ENCODE measurements at regions of chr2 and their contacts with region 1.

Region 1: GRCh38 chr2:237923481-237924163 is 43.2 kb upstream of the UBE2F start:
- DNase-seq: peak; percentile 73 to 89 (median 81)
- ATAC-seq: peak; percentile 52 to 91 (median 90)
- H3K4me3 ChIP-seq: peak overlapping the region in 10 of 12 donors; percentile 14 to 50 (median 36)
- H3K27ac ChIP-seq: peak overlapping the region in 9 of 12 donors; percentile 26 to 75 (median 52)
- H3K4me1 ChIP-seq: peaks cover 0 to 14% (median 6%) of the 10 kb centered on the region in 12 donors
- H3K27me3 ChIP-seq: no peaks in the 10 kb centered on the region
- CTCF ChIP-seq: peak; percentile 94 to 99 (median 98)
- POLR2A ChIP-seq: no peak

Region 2: DNA sequence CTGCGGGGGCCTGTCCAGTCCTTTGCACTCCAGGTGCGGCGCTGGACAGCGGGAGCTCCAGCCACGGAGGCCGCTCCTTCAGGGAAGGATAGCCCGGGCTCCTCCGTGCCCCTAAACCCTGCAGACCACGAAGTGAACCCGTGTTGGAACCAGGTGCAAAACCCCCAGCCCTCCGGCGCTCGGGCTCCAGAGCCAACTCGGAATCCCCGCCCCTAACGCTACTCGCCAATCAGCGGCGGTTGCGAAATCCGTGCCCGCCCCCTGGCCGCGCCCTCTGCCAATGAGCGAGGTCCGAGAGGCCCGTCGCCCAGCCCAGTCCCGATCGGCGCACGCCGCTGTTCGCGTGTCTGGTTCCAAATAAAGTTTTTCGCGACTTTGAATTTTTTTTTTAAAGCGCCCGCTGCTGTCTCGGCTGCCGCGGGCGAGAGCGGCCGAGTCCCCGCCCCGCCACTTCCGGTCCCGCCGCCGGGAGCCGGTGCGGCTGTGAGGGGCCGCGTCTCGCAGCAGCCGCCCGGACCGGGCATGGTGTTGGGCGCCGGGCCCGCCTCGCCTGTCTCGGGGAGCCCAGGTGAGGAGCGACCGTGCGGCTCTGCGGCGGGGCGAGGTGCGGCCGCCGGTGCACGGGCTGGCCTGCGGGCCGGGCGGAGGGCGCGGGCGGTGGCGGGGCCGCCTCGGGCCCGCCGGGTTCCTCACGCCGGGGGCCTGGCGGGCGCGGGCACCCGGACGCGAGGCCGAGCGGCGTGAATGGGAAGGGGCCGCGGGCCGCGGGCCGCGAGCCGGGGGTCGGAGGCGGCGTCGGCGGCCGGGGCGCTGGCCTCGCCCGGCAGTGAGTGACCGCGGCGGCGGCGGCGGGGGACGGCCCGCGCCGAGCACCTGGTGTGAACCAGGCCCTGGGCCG is 43.2 kb after region 1 on chr2 and contains the start of gene UBE2F:
- intact Hi-C with region 1: loop called in 2 of 10 experiments (anchors 2 kb)
- DNase-seq: peak; percentile 97 to 99 (median 98)
- ATAC-seq: peak; percentile 97 to 98 (median 98)
- H3K4me3 ChIP-seq: peak within 1 kb of the TSS; percentile 62 to 94 (median 72)
- H3K27ac ChIP-seq: peak within 1 kb of the TSS in 11 of 12 donors; percentile 51 to 88 (median 77)
- H3K4me1 ChIP-seq: peaks cover 4 to 44% (median 29%) of the 10 kb centered on the region in 12 donors
- H3K27me3 ChIP-seq: no peaks in the 10 kb centered on the region
- CTCF ChIP-seq: no peak
- POLR2A ChIP-seq: peak in 1 of 2 donors; percentile 84
- total RNA-seq, gene UBE2F: 54.2 to 73.8 (median 60.6) TPM

Region 3: GRCh38 chr2:238263204-238264071 is 339.8 kb after region 1 on chr2:
- intact Hi-C with region 1: loop called in 2 of 10 experiments (anchors 5 to 10 kb)
- DNase-seq: peak; percentile 87 to 94 (median 92)
- ATAC-seq: peak; percentile 64 to 92 (median 84)
- H3K4me3 ChIP-seq: no peak overlapping the region
- H3K27ac ChIP-seq: peak overlapping the region in 11 of 12 donors; percentile 22 to 73 (median 51)
- H3K4me1 ChIP-seq: peaks cover 0 to 38% (median 24%) of the 10 kb centered on the region in 12 donors
- H3K27me3 ChIP-seq: no peaks in the 10 kb centered on the region
- CTCF ChIP-seq: peak; percentile 74 to 88 (median 81)
- POLR2A ChIP-seq: no peak